ENCODE measurements at regions of chr7 and their contacts with region 1.

Region 1: GRCh38 chr7:35519971-35520809 is 174.7 kb downstream of the HERPUD2 start:
- DNase-seq: peak; percentile 90
- H3K4me3 Mint-ChIP-seq: no peak overlapping the region
- H3K27ac Mint-ChIP-seq: no peak overlapping the region
- H3K4me1 Mint-ChIP-seq: no peaks in the 10 kb centered on the region
- H3K27me3 Mint-ChIP-seq: peaks cover 17% of the 10 kb centered on the region

Region 2: DNA sequence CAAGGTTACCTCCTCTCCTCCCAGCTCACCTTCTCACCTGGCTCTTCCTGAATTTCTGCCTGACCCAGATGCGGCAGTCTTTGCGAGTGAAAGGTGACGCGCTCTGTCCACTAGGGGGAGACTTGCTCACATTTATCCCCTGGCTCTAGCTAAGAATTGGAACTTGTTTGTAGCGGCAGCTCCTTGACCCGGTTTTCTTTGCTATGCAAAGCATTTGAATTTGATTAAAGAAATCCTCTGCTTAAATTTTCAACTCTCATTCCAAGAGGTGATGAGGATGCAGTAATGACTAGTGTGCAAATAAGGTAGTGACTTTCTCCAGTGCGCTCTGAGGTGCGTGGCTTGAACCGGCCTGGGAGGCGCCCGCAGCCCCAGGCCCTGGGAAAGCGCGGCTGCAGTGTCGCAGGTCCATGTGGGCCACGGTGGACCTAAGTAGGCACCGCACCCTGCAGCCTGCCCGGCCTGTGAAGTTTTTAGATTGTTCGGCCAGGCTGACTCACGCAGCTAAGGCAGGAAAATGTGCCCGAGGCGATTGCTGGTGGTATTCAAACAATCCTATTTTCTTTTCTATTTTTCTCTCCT is 1199.1 kb before region 1 on chr7:
- intact Hi-C with region 1: loop called (anchors 5 kb)
- DNase-seq: peak; percentile 78
- H3K4me3 Mint-ChIP-seq: peak overlapping the region; percentile 53
- H3K27ac Mint-ChIP-seq: no peak overlapping the region
- H3K4me1 Mint-ChIP-seq: peaks cover 5% of the 10 kb centered on the region
- H3K27me3 Mint-ChIP-seq: peaks cover 8% of the 10 kb centered on the region

Region 3: DNA sequence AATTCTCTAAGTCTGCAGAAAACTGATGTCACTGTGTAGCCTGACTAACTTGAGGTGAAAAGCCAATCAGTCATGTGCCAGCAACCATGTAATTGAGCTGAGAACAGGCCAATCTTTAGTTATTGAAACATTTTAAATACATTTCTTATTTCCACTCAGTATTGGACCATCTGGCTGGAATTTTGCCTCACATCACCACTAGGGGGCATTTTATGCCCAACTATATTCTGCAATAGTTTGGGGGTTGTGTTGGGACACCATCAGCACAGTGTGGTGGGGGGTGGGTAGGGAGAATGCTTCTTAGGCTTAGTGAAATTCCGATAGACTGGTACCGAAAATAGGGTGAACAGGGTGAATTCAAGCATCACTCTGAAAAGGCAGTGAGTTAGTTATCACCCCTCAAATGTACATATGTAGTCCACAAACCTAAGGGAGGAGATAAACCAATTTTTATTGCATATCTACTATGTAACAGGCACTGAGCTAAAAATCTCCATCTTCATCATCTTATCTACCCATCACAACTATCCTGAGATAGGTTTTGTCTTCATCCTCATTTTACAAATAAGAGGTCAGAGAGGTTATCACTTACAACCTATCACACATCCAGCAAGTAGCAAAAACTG is 844.3 kb before region 1 on chr7:
- intact Hi-C with region 1: loop called (anchors 5 kb)
- DNase-seq: peak; percentile 67
- H3K4me3 Mint-ChIP-seq: no peak overlapping the region
- H3K27ac Mint-ChIP-seq: no peak overlapping the region
- H3K4me1 Mint-ChIP-seq: no peaks in the 10 kb centered on the region
- H3K27me3 Mint-ChIP-seq: no peaks in the 10 kb centered on the region

Region 4: DNA sequence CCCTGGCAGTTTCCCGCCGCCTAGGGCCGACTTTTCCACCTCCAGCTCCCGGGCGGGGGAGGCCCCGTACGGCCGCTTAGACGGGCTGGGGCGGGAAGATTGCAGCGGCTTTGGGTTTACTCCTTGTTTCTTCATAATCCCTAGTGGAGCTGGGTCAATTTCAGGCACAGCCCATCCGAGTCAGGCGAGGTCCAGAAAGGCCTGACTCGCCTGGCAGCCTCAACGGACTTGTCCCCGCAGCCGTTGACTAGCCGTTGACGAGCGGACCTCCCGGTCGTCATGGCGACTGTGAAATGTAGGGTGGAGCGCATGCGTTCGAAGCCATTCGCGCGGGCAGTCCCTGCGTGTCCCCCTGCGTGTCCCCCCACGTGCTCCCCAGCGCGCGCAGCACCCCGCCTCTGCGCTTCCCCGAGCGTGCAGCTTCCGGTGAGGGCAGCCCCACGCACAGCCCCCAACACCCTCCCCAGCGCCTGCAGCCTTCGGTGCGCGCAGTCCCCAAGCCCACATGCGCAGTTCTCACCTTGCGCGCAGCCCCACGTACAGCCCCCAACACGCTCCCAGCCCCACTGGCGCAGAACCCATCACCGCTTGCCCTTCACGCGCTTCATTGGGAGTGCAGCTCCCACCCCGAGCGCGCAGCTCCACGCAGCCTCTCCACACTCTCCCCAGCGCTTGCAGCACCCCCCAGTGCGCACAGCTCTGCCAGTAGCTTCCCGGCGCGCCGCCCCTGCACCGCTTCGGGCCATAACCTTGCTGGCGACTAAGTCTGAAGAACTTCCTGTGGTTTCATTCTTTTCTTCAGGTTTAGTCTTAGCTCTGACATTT is 334.1 kb before region 1 on chr7:
- intact Hi-C with region 1: loop called (anchors 2 kb)
- DNase-seq: peak; percentile 58
- H3K4me3 Mint-ChIP-seq: peak overlapping the region; percentile 73
- H3K27ac Mint-ChIP-seq: no peak overlapping the region
- H3K4me1 Mint-ChIP-seq: peaks cover 7% of the 10 kb centered on the region
- H3K27me3 Mint-ChIP-seq: peaks cover 37% of the 10 kb centered on the region

Region 5: GRCh38 chr7:35424869-35425495 is 95.2 kb before region 1 on chr7:
- intact Hi-C with region 1: loop called (anchors 1 kb)
- DNase-seq: peak; percentile 84
- H3K4me3 Mint-ChIP-seq: no peak overlapping the region
- H3K27ac Mint-ChIP-seq: no peak overlapping the region
- H3K4me1 Mint-ChIP-seq: no peaks in the 10 kb centered on the region
- H3K27me3 Mint-ChIP-seq: peaks cover 9% of the 10 kb centered on the region

Region 6: GRCh38 chr7:35725280-35725680 is 205.1 kb after region 1 on chr7:
- intact Hi-C with region 1: no loop called
- DNase-seq: peak; percentile 87
- H3K4me3 Mint-ChIP-seq: peak overlapping the region; percentile 49
- H3K27ac Mint-ChIP-seq: peak overlapping the region; percentile 39
- H3K4me1 Mint-ChIP-seq: peaks cover 50% of the 10 kb centered on the region
- H3K27me3 Mint-ChIP-seq: peaks cover 2% of the 10 kb centered on the region

Measured in activated CD4-positive, alpha-beta T cell treated with anti-CD3 and anti-CD28 coated beads, Interleukin-2, amount 10 ng/mL, durations not matched to agents 24 days and 14 days (primary cell).